Activated CD8-positive, alpha-beta T cell treated with anti-CD3 and anti-CD28 coated beads for 36 hours (primary cell): ENCODE measurements at regions of chr10 and their contacts with region 1.

Region 1: DNA sequence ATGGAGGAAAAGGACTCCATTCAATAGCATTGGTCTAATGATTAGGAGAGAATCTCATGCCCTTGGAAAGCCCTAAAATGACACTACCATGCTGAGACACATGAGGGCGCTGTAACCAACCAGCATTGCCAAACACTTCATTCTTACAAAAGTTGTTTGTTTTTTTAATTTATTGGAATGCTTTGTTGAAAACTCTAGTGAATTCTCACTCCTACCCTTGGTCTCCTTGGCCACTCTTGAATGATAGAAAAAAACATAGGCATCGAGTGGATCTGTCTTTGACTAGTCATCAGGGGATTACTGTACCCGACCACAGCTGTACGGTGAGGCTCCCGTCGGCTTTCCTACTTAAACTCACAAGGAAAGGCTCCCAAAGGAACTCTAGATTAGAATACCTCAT is 29.3 kb upstream of the ADD3 start:
- DNase-seq: peak; percentile 82
- ATAC-seq: peak; percentile 77
- H3K4me3 Mint-ChIP-seq: no peak overlapping the region
- H3K27ac Mint-ChIP-seq: no peak overlapping the region
- H3K4me1 Mint-ChIP-seq: peaks cover 15% of the 10 kb centered on the region
- H3K27me3 Mint-ChIP-seq: no peaks in the 10 kb centered on the region
- CTCF ChIP-seq: peak; percentile 97

Region 2: DNA sequence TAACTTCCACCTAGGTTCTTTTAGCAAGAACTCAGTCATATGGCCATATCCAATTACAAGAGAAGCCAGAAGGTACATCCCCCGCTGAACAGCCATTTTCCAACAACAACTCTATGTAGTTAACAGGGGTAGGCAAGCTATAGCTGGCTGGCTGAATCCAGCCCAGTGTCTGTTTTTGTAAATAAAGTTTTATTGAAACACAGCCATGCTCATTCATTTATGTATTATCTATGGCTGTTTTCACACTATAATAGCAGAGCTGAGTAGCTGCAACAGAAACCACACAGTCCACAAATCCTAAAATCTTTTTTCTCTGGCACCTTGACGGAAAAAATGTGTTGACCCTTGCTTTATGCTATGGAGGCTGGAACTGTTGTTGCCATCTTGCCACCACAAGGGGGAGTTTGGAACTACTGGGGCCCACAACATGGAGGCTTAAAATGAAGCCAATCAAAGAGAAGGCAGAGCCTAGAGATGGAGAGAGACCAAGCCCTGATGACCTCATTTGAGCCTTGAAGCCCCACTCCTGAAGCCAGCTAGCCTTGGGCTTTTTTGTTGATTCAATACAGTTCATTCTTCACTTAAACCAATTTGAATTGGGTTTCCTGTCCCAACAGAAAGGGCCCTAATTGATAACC is 21.9 kb before region 1 on chr10:
- CTCF ChIA-PET with region 1: interaction called, 12 read pairs
- POLR2A ChIA-PET with region 1: no interaction called
- intact Hi-C with region 1: no loop called
- DNase-seq: peak; percentile 50
- ATAC-seq: peak; percentile 97
- H3K4me3 Mint-ChIP-seq: no peak overlapping the region
- H3K27ac Mint-ChIP-seq: no peak overlapping the region
- H3K4me1 Mint-ChIP-seq: peaks cover 10% of the 10 kb centered on the region
- H3K27me3 Mint-ChIP-seq: no peaks in the 10 kb centered on the region
- CTCF ChIP-seq: peak; percentile 74

Region 3: DNA sequence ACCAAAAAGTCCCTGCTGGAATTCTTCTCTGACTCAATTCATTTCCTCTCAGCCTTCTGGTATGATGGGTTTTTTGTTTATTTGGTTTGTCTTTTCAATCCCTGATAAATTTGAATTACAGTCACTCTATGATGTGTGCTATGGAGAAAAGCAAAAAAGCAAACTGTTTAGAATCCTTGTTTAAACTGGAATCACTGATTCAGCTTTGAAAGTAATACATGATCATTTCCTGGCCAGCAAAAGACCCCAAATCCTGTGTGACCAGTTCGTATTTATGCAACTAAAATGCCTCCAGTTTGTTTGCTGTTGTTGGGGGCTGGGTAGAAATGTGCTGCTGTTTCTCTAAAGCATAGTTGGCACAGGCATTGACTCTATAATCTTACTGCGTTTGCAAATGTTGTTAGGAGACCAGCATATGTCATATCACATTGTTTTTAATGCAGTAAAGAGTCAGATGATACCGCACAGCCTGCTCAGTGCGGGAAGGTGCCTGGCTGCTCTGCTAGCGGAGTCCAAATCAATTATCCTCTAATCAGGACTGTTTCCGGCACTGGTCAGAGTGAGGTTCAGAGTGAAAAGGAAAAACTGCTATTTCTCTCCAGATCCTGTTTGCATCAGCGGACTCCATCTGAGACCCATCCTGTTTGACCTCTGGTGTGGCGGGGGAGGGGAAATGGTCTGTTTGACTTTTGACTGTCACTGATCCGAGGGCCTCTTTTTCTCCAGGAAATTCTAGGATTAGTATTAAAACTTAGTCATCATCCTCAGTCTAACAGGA is 11.3 kb before region 1 on chr10:
- CTCF ChIA-PET with region 1: interaction called, 27 read pairs
- POLR2A ChIA-PET with region 1: interaction called, 4 read pairs
- intact Hi-C with region 1: no loop called
- DNase-seq: no peak
- ATAC-seq: no peak
- H3K4me3 Mint-ChIP-seq: no peak overlapping the region
- H3K27ac Mint-ChIP-seq: no peak overlapping the region
- H3K4me1 Mint-ChIP-seq: peaks cover 3% of the 10 kb centered on the region
- H3K27me3 Mint-ChIP-seq: peaks cover 2% of the 10 kb centered on the region
- CTCF ChIP-seq: no peak

Region 4: DNA sequence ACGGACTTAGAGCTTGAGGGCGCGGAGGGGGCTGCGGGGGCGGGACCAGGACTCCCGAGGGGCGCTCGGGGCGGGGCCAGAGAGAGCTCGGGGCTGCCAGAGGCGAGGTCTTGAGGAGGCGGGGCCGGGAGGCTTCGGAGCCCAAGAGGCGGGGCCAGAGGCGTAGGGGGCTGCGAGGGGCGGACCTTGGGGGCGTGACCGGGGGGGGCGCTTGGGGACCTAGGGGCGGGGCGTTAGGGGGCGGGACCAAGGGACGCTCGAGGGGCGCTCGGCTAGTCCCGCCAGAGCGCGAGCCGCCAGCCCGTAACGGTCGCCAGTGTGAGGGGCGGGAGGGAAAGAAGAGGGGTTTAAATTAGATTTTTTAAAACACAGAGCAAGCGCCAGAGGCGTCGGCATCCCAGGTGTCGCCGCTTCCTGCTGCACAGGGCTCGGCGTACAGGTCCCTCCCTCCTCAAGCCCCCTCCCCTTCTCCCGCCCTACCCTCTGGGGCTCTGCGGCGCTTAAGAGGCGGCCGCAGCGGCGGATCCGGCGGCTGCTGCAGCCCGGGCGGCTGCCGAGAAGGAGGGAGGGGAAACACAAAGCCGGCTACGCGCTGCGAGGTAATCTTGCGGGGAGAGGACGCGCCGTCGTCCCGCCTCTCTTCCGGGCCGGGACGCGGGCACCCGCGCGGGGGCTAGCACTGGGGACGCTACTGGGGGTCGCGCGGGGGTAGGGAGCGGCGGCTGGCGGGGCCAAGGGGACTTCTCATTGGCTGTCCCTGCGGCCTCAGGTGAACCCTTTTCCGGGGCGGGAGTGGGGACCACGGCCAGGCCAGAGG is 29.4 kb after region 1 on chr10 and contains the start of gene ADD3:
- CTCF ChIA-PET with region 1: interaction called, 12 read pairs
- POLR2A ChIA-PET with region 1: no interaction called
- intact Hi-C with region 1: no loop called
- DNase-seq: peak; percentile 97
- ATAC-seq: peak; percentile 83
- H3K4me3 Mint-ChIP-seq: no peak within 1 kb of the TSS
- H3K27ac Mint-ChIP-seq: peak within 1 kb of the TSS; percentile 84
- H3K4me1 Mint-ChIP-seq: peaks cover 40% of the 10 kb centered on the region
- H3K27me3 Mint-ChIP-seq: no peaks in the 10 kb centered on the region
- CTCF ChIP-seq: no peak
- total RNA-seq, gene ADD3: 66.8 to 77.0 TPM

Region 5: GRCh38 chr10:110016039-110016438 is 37.6 kb after region 1 on chr10:
- CTCF ChIA-PET with region 1: interaction called, 11 read pairs
- POLR2A ChIA-PET with region 1: no interaction called
- intact Hi-C with region 1: no loop called
- DNase-seq: no peak
- ATAC-seq: no peak
- H3K4me3 Mint-ChIP-seq: no peak overlapping the region
- H3K27ac Mint-ChIP-seq: peak overlapping the region; percentile 79
- H3K4me1 Mint-ChIP-seq: peaks cover 70% of the 10 kb centered on the region
- H3K27me3 Mint-ChIP-seq: no peaks in the 10 kb centered on the region
- CTCF ChIP-seq: no peak